Transverse colon (tissue), 4 donors: ENCODE measurements at regions of chr18 and their contacts with region 1.

Region 1: GRCh38 chr18:23924813-23925212 is 89.7 kb upstream of the TTC39C start:
- DNase-seq: no peak
- H3K4me3 ChIP-seq: no peak overlapping the region
- H3K27ac ChIP-seq: no peak overlapping the region
- H3K4me1 ChIP-seq: peaks cover 0 to 2% (median 0%) of the 10 kb centered on the region in 4 donors
- H3K27me3 ChIP-seq: no peaks in the 10 kb centered on the region
- CTCF ChIP-seq: no peak
- EP300 ChIP-seq: no peak
- POLR2A ChIP-seq: no peak

Region 2: DNA sequence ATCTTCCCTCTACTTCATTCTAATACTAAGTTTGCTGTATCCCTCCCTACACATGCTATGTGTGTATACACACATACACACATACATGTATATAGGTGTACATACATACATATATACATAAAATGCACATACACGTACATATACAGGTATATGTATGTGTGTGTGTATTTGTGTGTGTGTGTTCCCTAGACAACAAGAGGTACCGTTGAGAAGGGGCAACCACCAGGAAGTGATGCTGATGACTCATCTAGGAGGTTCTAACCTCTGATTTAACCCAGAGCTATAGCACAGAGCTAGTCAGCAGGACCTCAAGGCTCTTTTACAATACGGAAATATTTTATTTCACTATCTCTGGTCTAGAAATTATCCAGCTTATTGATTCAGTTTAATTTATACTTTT is 96.4 kb before region 1 on chr18:
- in situ Hi-C with region 1: loop called in 1 of 4 experiments (anchors 10 kb)
- intact Hi-C with region 1: no loop called
- DNase-seq: no peak
- H3K4me3 ChIP-seq: no peak overlapping the region
- H3K27ac ChIP-seq: no peak overlapping the region
- H3K4me1 ChIP-seq: peaks cover 0 to 24% (median 4%) of the 10 kb centered on the region in 4 donors
- H3K27me3 ChIP-seq: no peaks in the 10 kb centered on the region
- CTCF ChIP-seq: no peak
- EP300 ChIP-seq: no peak
- POLR2A ChIP-seq: no peak